GM10248 (cell line): ENCODE measurements at regions of chr3 and their contacts with region 1.

Region 1: GRCh38 chr3:180912304-180913296 is at the start of gene FXR1:
- DNase-seq: peak; percentile 87
- CTCF ChIP-seq: peak; percentile 76

Region 2: DNA sequence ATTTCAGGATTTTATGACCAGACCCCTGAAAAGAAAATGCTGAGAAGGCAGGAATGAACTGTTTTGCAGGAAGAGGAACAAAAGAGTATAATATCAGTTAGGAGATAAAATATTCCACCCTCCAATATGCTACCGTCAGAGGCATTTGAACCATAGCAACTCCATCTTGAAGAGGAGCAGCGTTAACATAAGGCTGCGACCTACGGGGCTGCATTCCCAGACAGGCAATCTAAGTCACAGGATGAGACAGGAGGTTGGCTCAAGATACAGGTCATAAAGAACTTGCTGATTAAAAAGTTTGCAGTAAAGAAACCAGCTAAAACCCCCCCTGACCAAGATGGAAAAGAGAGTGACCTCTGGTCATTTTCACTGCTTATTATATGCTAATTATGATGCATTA is 256.2 kb before region 1 on chr3:
- CTCF ChIA-PET with region 1: no interaction called
- POLR2A ChIA-PET with region 1: no interaction called
- DNase-seq: no peak
- CTCF ChIP-seq: no peak

Region 3: GRCh38 chr3:180743813-180744605 is 168.6 kb before region 1 on chr3:
- CTCF ChIA-PET with region 1: no interaction called
- POLR2A ChIA-PET with region 1: no interaction called
- DNase-seq: no peak
- CTCF ChIP-seq: no peak

Region 4: GRCh38 chr3:180898572-180898971 is 14.0 kb before region 1 on chr3:
- CTCF ChIA-PET with region 1: interaction called, 18 read pairs
- POLR2A ChIA-PET with region 1: interaction called, 5 read pairs
- DNase-seq: no peak
- CTCF ChIP-seq: no peak

Region 5: DNA sequence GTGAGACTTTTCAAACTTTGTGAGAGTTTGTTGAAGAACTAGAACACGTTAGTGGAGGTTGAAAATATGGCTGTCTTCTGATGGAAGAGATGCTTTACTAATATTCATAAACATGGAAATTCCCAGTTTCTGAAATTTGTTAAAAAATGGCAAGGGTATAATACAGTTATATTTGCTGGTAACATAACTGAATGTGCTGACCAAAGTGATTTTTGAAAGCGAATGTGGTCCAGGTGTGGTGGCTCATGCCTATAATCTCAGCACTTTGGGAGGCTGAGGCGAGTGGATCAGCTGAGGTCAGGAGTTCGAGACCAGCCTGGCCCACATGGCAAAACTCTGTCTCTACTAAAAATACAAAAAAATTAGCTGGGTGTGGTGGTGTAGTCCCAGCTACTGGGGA is 17.9 kb after region 1 on chr3:
- CTCF ChIA-PET with region 1: interaction called, 14 read pairs
- POLR2A ChIA-PET with region 1: no interaction called
- DNase-seq: no peak
- CTCF ChIP-seq: no peak